Sciatic nerve (tissue), 2 donors: ENCODE measurements at regions of chr9 and their contacts with region 1.

Region 1: GRCh38 chr9:74985041-74985440 is 32.3 kb upstream of the C9orf40 start:
- DNase-seq: no peak
- ATAC-seq: no peak

Region 2: GRCh38 chr9:74777136-74777879 is 207.7 kb before region 1 on chr9:
- intact Hi-C with region 1: loop called (anchors 5 kb)
- DNase-seq: peak; percentile 85
- ATAC-seq: peak; percentile 55